ENCODE measurements at regions of chr7 and their contacts with region 1.

Region 1: DNA sequence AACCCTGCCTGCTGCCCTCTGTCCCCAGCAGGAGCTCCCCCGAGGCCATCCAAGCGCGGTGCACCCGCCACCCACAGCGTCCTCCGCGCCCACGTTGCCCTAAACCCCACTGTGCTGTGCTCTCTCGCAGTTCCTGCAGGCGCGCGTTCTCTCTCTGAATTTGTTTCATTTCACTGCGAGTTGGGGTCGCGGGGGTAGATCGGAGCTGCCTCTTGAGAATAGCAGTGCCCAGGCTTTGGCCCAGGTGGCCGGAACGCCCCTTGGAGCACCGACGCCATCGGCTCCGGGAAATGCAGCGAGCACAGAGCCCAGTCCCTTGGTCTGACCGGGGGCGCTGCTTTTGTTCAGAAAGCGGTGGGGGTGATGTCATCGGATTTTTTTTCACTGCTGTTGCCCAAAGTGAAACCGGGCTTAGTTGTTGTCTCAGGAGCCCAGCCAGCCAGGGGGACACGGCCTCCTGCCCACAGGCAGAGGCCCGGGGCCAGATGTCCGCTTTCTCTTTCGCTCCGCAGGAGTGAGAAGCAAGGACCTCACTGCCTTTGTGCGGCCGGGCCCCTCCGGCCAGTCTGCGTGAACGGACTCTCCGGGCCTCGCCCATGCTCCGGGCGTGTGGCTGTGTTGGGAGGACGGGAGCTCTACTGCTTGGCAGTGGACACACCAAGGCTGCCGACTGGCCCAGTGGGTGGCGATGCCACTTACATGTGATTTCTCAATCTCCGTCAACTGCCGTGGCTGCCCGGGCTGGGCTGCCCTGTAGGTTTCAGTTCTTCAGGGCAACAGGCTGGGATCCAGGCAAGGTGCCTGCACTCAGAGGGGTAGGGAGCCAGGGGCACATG is 43.1 kb downstream of the FOXK1 start:
- H3K4me3 Mint-ChIP-seq: peak overlapping the region; percentile 79
- H3K27ac Mint-ChIP-seq: peak overlapping the region; percentile 94
- H3K4me1 Mint-ChIP-seq: peaks cover 74% of the 10 kb centered on the region
- H3K27me3 Mint-ChIP-seq: no peaks in the 10 kb centered on the region

Region 2: DNA sequence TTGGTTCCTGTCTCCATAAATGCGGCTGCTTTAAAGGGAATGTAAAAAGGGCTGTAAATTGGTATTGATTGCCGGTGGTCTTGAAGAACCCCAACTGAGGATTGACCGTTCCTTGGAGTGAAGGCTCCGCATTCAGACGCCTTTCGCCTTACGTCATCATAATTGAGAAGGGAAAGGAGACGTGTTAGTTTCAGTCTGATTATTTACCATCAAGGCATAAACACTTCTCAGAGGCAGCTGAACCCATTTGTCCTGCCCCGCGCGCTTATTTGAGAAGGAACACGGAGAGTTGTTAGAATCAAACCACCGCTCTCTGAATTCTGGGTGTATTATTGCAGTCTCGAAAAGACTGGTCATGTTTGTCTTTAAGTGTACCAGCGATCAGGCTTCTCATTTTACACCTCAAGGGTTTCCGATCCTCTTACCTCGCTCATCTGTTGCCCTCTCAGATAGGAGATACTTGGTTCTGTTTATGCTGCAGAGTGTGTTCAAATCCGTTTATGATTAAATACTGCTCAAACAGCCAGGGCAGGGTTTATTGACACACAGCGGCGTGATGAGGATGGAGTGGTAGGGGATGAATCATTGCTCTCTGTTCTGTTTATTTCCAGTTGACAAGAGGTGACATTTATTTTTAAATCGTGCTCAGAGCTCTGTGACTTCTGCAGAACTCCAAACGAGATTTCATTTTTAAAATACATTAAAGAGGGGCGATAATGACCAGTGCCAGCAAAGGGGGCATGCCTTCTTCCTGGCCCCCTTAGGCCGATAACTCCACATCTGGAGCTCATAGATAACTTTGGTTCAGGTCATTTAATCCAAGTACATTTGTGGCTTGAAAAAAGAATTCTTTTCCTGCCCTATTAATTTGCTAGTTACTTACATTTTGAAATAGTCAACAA is 12.7 kb before region 1 on chr7:
- intact Hi-C with region 1: loop called (anchors 1 kb)
- H3K4me3 Mint-ChIP-seq: no peak overlapping the region
- H3K27ac Mint-ChIP-seq: peak overlapping the region; percentile 72
- H3K4me1 Mint-ChIP-seq: peaks cover 91% of the 10 kb centered on the region
- H3K27me3 Mint-ChIP-seq: no peaks in the 10 kb centered on the region